ENCODE measurements at regions of chr7 and their contacts with region 1.

Region 1: DNA sequence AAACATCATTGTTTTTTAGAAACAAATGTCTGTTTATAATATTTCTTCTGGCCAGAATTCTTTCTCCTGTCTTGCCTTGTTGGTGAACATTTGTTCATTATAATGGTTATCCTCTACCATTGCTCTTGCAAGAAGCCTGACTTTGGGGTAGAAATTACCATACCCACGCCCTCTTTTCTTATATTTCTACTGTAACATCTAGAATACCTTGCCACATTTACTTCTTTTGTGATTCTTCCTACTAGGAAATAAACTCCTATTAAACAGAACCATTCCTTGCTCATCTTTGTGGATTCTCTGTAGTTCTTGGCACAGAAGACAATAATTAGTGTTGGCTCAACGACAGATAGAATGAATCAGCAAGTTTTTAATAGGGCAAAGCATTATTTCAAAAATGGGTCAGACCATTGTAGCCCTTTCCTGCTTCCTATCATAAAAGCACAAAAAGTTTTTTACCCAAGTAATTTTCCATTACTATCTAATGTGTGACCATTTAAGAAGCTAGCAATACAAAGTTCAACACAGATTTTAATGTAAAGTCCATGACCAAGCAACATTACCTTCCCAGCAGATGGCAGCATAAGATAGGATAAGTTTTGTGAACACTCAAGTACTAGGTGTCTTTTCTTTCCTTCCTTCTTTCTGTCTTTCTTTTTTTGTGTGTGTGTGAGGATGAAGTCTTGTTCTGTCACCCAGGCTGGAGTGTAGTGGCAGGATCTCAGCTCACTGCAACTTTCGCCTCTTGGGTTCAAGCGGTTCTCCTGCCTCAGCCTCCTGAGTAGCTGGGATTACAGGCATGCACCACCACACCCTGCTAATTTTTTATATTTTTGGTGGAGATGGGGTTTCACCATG is 270.4 kb downstream of the HGF start:
- DNase-seq: peak; percentile 80
- H3K4me3 Mint-ChIP-seq: no peak overlapping the region
- H3K27ac Mint-ChIP-seq: no peak overlapping the region
- H3K4me1 Mint-ChIP-seq: peaks cover 9% of the 10 kb centered on the region
- H3K27me3 Mint-ChIP-seq: peaks cover 21% of the 10 kb centered on the region
- CTCF ChIP-seq: peak; percentile 54

Region 2: DNA sequence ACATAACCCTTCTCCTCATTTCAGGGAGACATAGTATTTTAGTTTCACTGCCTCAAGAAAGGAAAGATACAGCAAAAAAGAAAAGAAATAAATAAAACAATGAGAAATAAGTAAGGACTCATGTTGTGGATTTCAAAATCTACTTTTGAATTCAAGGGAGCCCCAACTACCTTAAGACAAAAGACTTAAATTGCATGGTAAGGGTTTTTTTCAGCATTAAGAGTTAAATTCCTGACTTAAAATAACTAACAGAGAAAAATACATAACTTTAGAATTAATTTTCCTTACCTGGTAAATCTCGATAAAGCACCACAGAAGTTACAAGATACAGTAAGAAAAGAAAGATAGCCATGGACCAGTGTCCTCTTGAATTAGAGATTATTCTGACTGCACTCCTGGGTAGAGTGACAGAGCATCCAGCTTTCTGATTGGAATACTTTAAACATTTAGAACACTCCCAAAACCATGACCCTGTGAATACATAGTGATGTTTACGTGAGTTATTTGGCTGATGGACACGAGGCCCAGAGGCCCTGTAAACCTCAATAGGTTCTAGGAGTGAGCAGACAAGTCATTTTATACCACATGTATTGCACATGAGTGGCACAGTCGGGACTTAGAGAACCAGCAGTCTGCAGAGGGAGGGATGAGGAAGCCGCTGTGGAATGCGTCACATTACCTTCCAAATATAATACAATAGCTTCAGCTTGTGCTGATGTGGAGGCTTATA is 288.1 kb before region 1 on chr7:
- CTCF ChIA-PET with region 1: no interaction called
- POLR2A ChIA-PET with region 1: no interaction called
- intact Hi-C with region 1: no loop called
- DNase-seq: no peak
- H3K4me3 Mint-ChIP-seq: no peak overlapping the region
- H3K27ac Mint-ChIP-seq: no peak overlapping the region
- H3K4me1 Mint-ChIP-seq: peaks cover 12% of the 10 kb centered on the region
- H3K27me3 Mint-ChIP-seq: no peaks in the 10 kb centered on the region
- CTCF ChIP-seq: no peak

Region 3: GRCh38 chr7:81294897-81295515 is 204.5 kb before region 1 on chr7:
- CTCF ChIA-PET with region 1: no interaction called
- POLR2A ChIA-PET with region 1: no interaction called
- intact Hi-C with region 1: no loop called
- DNase-seq: no peak
- H3K4me3 Mint-ChIP-seq: no peak overlapping the region
- H3K27ac Mint-ChIP-seq: no peak overlapping the region
- H3K4me1 Mint-ChIP-seq: peaks cover 24% of the 10 kb centered on the region
- H3K27me3 Mint-ChIP-seq: no peaks in the 10 kb centered on the region
- CTCF ChIP-seq: no peak

Region 4: GRCh38 chr7:81469869-81470723 is 29.4 kb before region 1 on chr7:
- CTCF ChIA-PET with region 1: no interaction called
- POLR2A ChIA-PET with region 1: no interaction called
- intact Hi-C with region 1: no loop called
- DNase-seq: peak; percentile 73
- H3K4me3 Mint-ChIP-seq: no peak overlapping the region
- H3K27ac Mint-ChIP-seq: no peak overlapping the region
- H3K4me1 Mint-ChIP-seq: peaks cover 7% of the 10 kb centered on the region
- H3K27me3 Mint-ChIP-seq: no peaks in the 10 kb centered on the region
- CTCF ChIP-seq: peak; percentile 65

Region 5: GRCh38 chr7:81488210-81488609 is 11.3 kb before region 1 on chr7:
- CTCF ChIA-PET with region 1: interaction called, 78 read pairs
- POLR2A ChIA-PET with region 1: no interaction called
- intact Hi-C with region 1: no loop called
- DNase-seq: peak; percentile 46
- H3K4me3 Mint-ChIP-seq: no peak overlapping the region
- H3K27ac Mint-ChIP-seq: no peak overlapping the region
- H3K4me1 Mint-ChIP-seq: no peaks in the 10 kb centered on the region
- H3K27me3 Mint-ChIP-seq: peaks cover 11% of the 10 kb centered on the region
- CTCF ChIP-seq: no peak

Region 6: GRCh38 chr7:81715984-81716588 is 216.6 kb after region 1 on chr7:
- CTCF ChIA-PET with region 1: interaction called, 224 read pairs
- POLR2A ChIA-PET with region 1: interaction called, 4 read pairs
- intact Hi-C with region 1: loop called (anchors 1 kb)
- DNase-seq: peak; percentile 58
- H3K4me3 Mint-ChIP-seq: no peak overlapping the region
- H3K27ac Mint-ChIP-seq: no peak overlapping the region
- H3K4me1 Mint-ChIP-seq: no peaks in the 10 kb centered on the region
- H3K27me3 Mint-ChIP-seq: no peaks in the 10 kb centered on the region
- CTCF ChIP-seq: peak; percentile 75

Region 7: GRCh38 chr7:81956520-81956919 is 457.0 kb after region 1 on chr7:
- CTCF ChIA-PET with region 1: interaction called, 19 read pairs
- POLR2A ChIA-PET with region 1: interaction called, 3 read pairs
- intact Hi-C with region 1: loop called (anchors 1 kb)
- DNase-seq: peak; percentile 22
- H3K4me3 Mint-ChIP-seq: no peak overlapping the region
- H3K27ac Mint-ChIP-seq: no peak overlapping the region
- H3K4me1 Mint-ChIP-seq: no peaks in the 10 kb centered on the region
- H3K27me3 Mint-ChIP-seq: peaks cover 66% of the 10 kb centered on the region
- CTCF ChIP-seq: peak; percentile 23

Region 8: GRCh38 chr7:82017334-82017943 is 518.0 kb after region 1 on chr7:
- CTCF ChIA-PET with region 1: interaction called, 124 read pairs
- POLR2A ChIA-PET with region 1: interaction called, 4 read pairs
- intact Hi-C with region 1: loop called (anchors 1 kb)
- DNase-seq: peak; percentile 28
- H3K4me3 Mint-ChIP-seq: no peak overlapping the region
- H3K27ac Mint-ChIP-seq: no peak overlapping the region
- H3K4me1 Mint-ChIP-seq: peaks cover 4% of the 10 kb centered on the region
- H3K27me3 Mint-ChIP-seq: peaks cover 39% of the 10 kb centered on the region
- CTCF ChIP-seq: peak; percentile 28

Region 9: GRCh38 chr7:82572195-82572880 is 1072.8 kb after region 1 on chr7:
- CTCF ChIA-PET with region 1: interaction called, 6 read pairs
- POLR2A ChIA-PET with region 1: no interaction called
- intact Hi-C with region 1: loop called (anchors 2 kb)
- DNase-seq: peak; percentile 82
- H3K4me3 Mint-ChIP-seq: no peak overlapping the region
- H3K27ac Mint-ChIP-seq: no peak overlapping the region
- H3K4me1 Mint-ChIP-seq: no peaks in the 10 kb centered on the region
- H3K27me3 Mint-ChIP-seq: peaks cover 68% of the 10 kb centered on the region
- CTCF ChIP-seq: peak; percentile 74